ENCODE measurements at regions of chr9 and their contacts with region 1.

Region 1: GRCh38 chr9:15606643-15607472 is 54.0 kb downstream of the CCDC171 start:
- DNase-seq: peak in 7 of 9 donors; percentile 29 to 71 (median 60)
- ATAC-seq: peak; percentile 55
- H3K4me3 ChIP-seq: no peak overlapping the region
- H3K4me3 Mint-ChIP-seq: no peak overlapping the region
- H3K27ac ChIP-seq: no peak overlapping the region
- H3K27ac Mint-ChIP-seq: no peak overlapping the region
- H3K4me1 ChIP-seq: no peaks in the 10 kb centered on the region
- H3K4me1 Mint-ChIP-seq: peaks cover 0 to 7% (median 0%) of the 10 kb centered on the region in 7 donors
- H3K27me3 ChIP-seq: no peaks in the 10 kb centered on the region
- H3K27me3 Mint-ChIP-seq: no peaks in the 10 kb centered on the region

Region 2: DNA sequence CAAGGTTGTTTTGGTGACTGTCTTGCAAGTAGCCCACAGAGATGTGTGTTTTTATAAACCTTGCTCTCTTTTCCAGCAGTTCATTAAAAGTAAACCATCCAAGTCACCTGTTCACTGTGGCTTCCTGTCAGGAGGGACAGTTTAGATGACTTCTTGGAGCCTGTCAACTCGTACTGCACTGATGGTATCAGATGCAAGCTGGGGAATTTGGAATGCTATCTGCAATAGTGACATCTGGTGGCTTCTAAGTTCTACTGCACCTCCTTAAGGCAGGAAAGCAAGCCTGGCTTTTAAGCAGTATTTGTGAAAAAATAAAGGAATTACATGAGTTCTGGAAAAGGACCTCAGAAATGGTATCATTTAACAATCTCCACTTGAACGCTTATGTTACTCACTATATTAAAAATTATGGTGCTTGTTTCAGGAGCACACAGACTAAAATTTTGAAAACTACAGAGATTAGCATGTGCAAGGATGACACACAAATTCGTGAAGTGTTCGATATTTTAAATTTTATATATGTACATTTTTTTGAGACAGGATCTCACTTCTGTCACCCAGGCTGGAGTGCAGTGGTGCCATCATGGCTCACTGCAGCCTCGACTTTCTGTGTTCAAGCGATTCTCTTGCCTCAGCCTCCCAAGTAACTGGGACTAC is 463.9 kb before region 1 on chr9:
- CTCF ChIA-PET with region 1: no interaction called
- POLR2A ChIA-PET with region 1: no interaction called
- intact Hi-C with region 1: loop called in 1 of 2 experiments (anchors 1 kb)
- DNase-seq: peak in 7 of 9 donors; percentile 7 to 45 (median 22)
- ATAC-seq: peak; percentile 83
- H3K4me3 ChIP-seq: no peak overlapping the region
- H3K4me3 Mint-ChIP-seq: no peak overlapping the region
- H3K27ac ChIP-seq: no peak overlapping the region
- H3K27ac Mint-ChIP-seq: no peak overlapping the region
- H3K4me1 ChIP-seq: no peaks in the 10 kb centered on the region
- H3K4me1 Mint-ChIP-seq: peaks cover 0 to 9% (median 3%) of the 10 kb centered on the region in 7 donors
- H3K27me3 ChIP-seq: no peaks in the 10 kb centered on the region
- H3K27me3 Mint-ChIP-seq: peaks cover 0 to 14% (median 5%) of the 10 kb centered on the region in 5 donors

Region 3: GRCh38 chr9:15374336-15374735 is 232.5 kb before region 1 on chr9:
- CTCF ChIA-PET with region 1: no interaction called
- POLR2A ChIA-PET with region 1: no interaction called
- intact Hi-C with region 1: no loop called
- DNase-seq: no peak
- ATAC-seq: peak; percentile 45
- H3K4me3 ChIP-seq: no peak overlapping the region
- H3K4me3 Mint-ChIP-seq: no peak overlapping the region
- H3K27ac ChIP-seq: no peak overlapping the region
- H3K27ac Mint-ChIP-seq: no peak overlapping the region
- H3K4me1 ChIP-seq: no peaks in the 10 kb centered on the region
- H3K4me1 Mint-ChIP-seq: peaks cover 0 to 7% (median 0%) of the 10 kb centered on the region in 7 donors
- H3K27me3 ChIP-seq: no peaks in the 10 kb centered on the region
- H3K27me3 Mint-ChIP-seq: peaks cover 0 to 13% (median 6%) of the 10 kb centered on the region in 5 donors

Region 4: GRCh38 chr9:15416880-15417279 is 190.0 kb before region 1 on chr9:
- CTCF ChIA-PET with region 1: no interaction called
- POLR2A ChIA-PET with region 1: no interaction called
- intact Hi-C with region 1: loop called (anchors 1 to 5 kb)
- DNase-seq: peak in 7 of 9 donors; percentile 21 to 45 (median 39)
- ATAC-seq: no peak
- H3K4me3 ChIP-seq: no peak overlapping the region
- H3K4me3 Mint-ChIP-seq: no peak overlapping the region
- H3K27ac ChIP-seq: no peak overlapping the region
- H3K27ac Mint-ChIP-seq: no peak overlapping the region
- H3K4me1 ChIP-seq: no peaks in the 10 kb centered on the region
- H3K4me1 Mint-ChIP-seq: peaks cover 0 to 10% (median 2%) of the 10 kb centered on the region in 7 donors
- H3K27me3 ChIP-seq: no peaks in the 10 kb centered on the region
- H3K27me3 Mint-ChIP-seq: peaks cover 0 to 7% (median 0%) of the 10 kb centered on the region in 5 donors

Region 5: GRCh38 chr9:15485836-15486666 is 120.8 kb before region 1 on chr9:
- CTCF ChIA-PET with region 1: interaction called, 3 read pairs
- POLR2A ChIA-PET with region 1: no interaction called
- intact Hi-C with region 1: loop called (anchors 1 to 5 kb)
- DNase-seq: peak in 5 of 9 donors; percentile 27 to 41 (median 31)
- ATAC-seq: peak; percentile 45
- H3K4me3 ChIP-seq: no peak overlapping the region
- H3K4me3 Mint-ChIP-seq: no peak overlapping the region
- H3K27ac ChIP-seq: no peak overlapping the region
- H3K27ac Mint-ChIP-seq: peak overlapping the region in 8 of 9 donors; percentile 10 to 63 (median 42)
- H3K4me1 ChIP-seq: peaks cover 6 to 9% of the 10 kb centered on the region in 2 donors
- H3K4me1 Mint-ChIP-seq: peaks cover 19 to 57% (median 47%) of the 10 kb centered on the region in 7 donors
- H3K27me3 ChIP-seq: no peaks in the 10 kb centered on the region
- H3K27me3 Mint-ChIP-seq: no peaks in the 10 kb centered on the region

Region 6: GRCh38 chr9:15735083-15735974 is 128.5 kb after region 1 on chr9:
- CTCF ChIA-PET with region 1: no interaction called
- POLR2A ChIA-PET with region 1: no interaction called
- intact Hi-C with region 1: no loop called
- DNase-seq: no peak
- ATAC-seq: no peak
- H3K4me3 ChIP-seq: no peak overlapping the region
- H3K4me3 Mint-ChIP-seq: no peak overlapping the region
- H3K27ac ChIP-seq: no peak overlapping the region
- H3K27ac Mint-ChIP-seq: no peak overlapping the region
- H3K4me1 ChIP-seq: no peaks in the 10 kb centered on the region
- H3K4me1 Mint-ChIP-seq: no peaks in the 10 kb centered on the region
- H3K27me3 ChIP-seq: no peaks in the 10 kb centered on the region
- H3K27me3 Mint-ChIP-seq: no peaks in the 10 kb centered on the region

Region 7: GRCh38 chr9:16289639-16290038 is 682.8 kb after region 1 on chr9:
- CTCF ChIA-PET with region 1: no interaction called
- POLR2A ChIA-PET with region 1: no interaction called
- intact Hi-C with region 1: no loop called
- DNase-seq: no peak
- ATAC-seq: peak; percentile 68
- H3K4me3 ChIP-seq: no peak overlapping the region
- H3K4me3 Mint-ChIP-seq: no peak overlapping the region
- H3K27ac ChIP-seq: no peak overlapping the region
- H3K27ac Mint-ChIP-seq: no peak overlapping the region
- H3K4me1 ChIP-seq: no peaks in the 10 kb centered on the region
- H3K4me1 Mint-ChIP-seq: no peaks in the 10 kb centered on the region
- H3K27me3 ChIP-seq: no peaks in the 10 kb centered on the region
- H3K27me3 Mint-ChIP-seq: peaks cover 0 to 14% (median 5%) of the 10 kb centered on the region in 5 donors